Activated T-helper 1 cell treated with anti-CD3 and anti-CD28 coated beads, Interleukin-12 subunit alpha, Interleukin-12 subunit beta, Interleukin-2, Interleukin-4 antibody, amounts not matched to agents 30 ng/mL and 10 ng/mL and 1 ng/mL, durations not matched to agents 14 hours and 24 hours and 36 hours (primary cell): ENCODE measurements at regions of chr16 and their contacts with region 1.

Region 1: GRCh38 chr16:79071424-79071823 is 529.1 kb downstream of the MAF start:
- DNase-seq: no peak
- H3K4me3 Mint-ChIP-seq: no peak overlapping the region
- H3K27ac Mint-ChIP-seq: peak overlapping the region; percentile 21
- H3K4me1 Mint-ChIP-seq: peaks cover 74% of the 10 kb centered on the region
- H3K27me3 Mint-ChIP-seq: peaks cover 5% of the 10 kb centered on the region

Region 2: GRCh38 chr16:78742501-78743283 is 328.7 kb before region 1 on chr16:
- intact Hi-C with region 1: loop called (anchors 1 kb)
- DNase-seq: peak; percentile 70
- H3K4me3 Mint-ChIP-seq: peak overlapping the region; percentile 74
- H3K27ac Mint-ChIP-seq: peak overlapping the region; percentile 77
- H3K4me1 Mint-ChIP-seq: peaks cover 33% of the 10 kb centered on the region
- H3K27me3 Mint-ChIP-seq: peaks cover 10% of the 10 kb centered on the region

Region 3: DNA sequence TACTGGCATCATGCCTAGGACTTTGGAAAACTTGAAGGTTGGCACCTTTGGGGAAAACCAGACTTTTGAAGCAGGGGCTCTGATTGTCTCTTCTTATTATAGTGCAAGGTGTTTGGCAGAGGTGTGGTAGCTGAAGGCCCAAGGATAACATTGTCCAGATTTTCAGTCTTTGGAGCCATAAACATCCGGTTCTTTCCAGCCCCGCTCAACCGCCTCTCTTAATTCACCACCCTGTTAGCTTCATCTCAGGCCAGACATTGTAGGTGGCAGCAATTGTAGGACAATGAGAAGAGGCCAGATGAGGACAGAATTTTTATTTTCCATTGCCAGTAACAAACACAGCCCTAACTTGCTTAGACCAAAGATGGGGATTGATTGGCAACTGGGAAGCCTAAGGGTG is 120.7 kb before region 1 on chr16:
- intact Hi-C with region 1: no loop called
- DNase-seq: no peak
- H3K4me3 Mint-ChIP-seq: no peak overlapping the region
- H3K27ac Mint-ChIP-seq: no peak overlapping the region
- H3K4me1 Mint-ChIP-seq: no peaks in the 10 kb centered on the region
- H3K27me3 Mint-ChIP-seq: no peaks in the 10 kb centered on the region

Region 4: GRCh38 chr16:78962457-78962929 is 108.9 kb before region 1 on chr16:
- intact Hi-C with region 1: loop called (anchors 1 kb)
- DNase-seq: no peak
- H3K4me3 Mint-ChIP-seq: no peak overlapping the region
- H3K27ac Mint-ChIP-seq: peak overlapping the region; percentile 53
- H3K4me1 Mint-ChIP-seq: peaks cover 9% of the 10 kb centered on the region
- H3K27me3 Mint-ChIP-seq: peaks cover 2% of the 10 kb centered on the region

Region 5: GRCh38 chr16:79169239-79169638 is 97.8 kb after region 1 on chr16:
- intact Hi-C with region 1: loop called (anchors 10 kb)
- DNase-seq: peak; percentile 11
- H3K4me3 Mint-ChIP-seq: no peak overlapping the region
- H3K27ac Mint-ChIP-seq: no peak overlapping the region
- H3K4me1 Mint-ChIP-seq: peaks cover 14% of the 10 kb centered on the region
- H3K27me3 Mint-ChIP-seq: no peaks in the 10 kb centered on the region

Region 6: DNA sequence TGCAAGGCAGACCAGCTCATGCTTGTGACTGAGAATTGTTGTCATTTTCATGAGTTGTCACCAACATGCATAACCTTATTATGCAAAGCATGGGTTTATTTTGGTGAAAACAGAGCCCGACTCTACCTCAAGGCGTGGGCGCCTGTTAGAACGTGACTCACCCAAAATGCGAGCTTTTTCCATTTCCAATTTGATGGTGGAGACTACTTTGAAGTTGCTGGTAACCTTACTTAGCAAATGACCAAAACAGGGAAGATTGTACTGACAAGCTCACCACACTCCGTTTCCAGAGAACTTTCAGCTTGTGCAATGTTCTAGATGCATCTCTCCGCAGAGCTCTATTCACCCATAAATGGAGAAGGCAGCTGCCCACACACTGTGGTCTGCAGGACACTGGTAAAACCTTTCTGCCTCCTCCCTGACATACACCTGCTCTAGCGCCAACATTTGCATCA is 244.6 kb after region 1 on chr16:
- intact Hi-C with region 1: loop called (anchors 1 kb)
- DNase-seq: peak; percentile 54
- H3K4me3 Mint-ChIP-seq: peak overlapping the region; percentile 64
- H3K27ac Mint-ChIP-seq: peak overlapping the region; percentile 90
- H3K4me1 Mint-ChIP-seq: peaks cover 29% of the 10 kb centered on the region
- H3K27me3 Mint-ChIP-seq: peaks cover 10% of the 10 kb centered on the region